ENCODE measurements at regions of chr7 and their contacts with region 1.

Region 1: DNA sequence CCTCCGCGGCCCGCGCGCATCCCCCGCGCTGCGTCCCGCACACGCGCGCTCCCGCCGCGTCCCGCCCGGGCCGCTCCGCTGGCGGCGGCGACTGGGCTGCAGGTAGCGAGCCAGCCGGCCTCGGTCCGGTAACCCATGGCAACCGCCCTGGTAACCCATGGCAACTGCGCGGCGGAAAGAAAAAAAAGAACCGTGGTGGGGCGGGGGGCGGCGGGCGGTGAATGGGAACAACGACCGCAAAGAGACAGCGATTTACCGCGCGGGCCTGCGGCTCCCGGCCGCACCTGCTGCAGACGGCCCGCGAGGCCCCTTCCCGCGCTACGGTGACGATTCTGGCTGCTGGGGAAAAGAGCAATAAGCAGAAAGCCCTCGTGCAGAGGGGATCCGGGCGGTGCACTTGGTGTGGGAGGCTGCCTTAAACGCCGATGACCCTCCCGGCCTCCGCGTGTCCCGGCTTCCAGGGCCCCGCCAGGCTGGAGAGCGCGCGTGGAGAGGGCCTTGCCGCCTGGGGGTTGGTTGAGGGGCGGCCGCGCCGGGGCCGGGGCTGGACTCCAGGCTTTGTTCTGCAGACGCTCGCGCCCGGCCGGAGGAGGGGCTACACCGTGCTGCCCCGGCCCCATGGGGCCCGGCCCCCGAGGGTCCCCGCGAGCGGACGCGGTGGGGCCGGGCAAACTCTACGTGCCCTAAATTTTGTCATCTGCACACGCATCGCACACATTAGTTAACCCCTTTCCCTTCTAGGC is 84.7 kb downstream of the SNX10 start:
- DNase-seq: peak in 1 of 2 experiments; percentile 95
- H3K4me3 ChIP-seq: peak overlapping the region; percentile 44 to 89 (median 78)
- H3K27ac ChIP-seq: no peak overlapping the region
- H3K4me1 ChIP-seq: peaks cover 0 to 2% (median 0%) of the 10 kb centered on the region in 4 experiments; a peak in 2 of 7 replicates
- H3K27me3 ChIP-seq: no peaks in the 10 kb centered on the region
- CTCF ChIP-seq: no peak
- EP300 ChIP-seq: no peak
- POLR2A ChIP-seq: no peak
- RAD21 ChIP-seq: no peak; a peak in 1 of 4 replicates

Region 2: DNA sequence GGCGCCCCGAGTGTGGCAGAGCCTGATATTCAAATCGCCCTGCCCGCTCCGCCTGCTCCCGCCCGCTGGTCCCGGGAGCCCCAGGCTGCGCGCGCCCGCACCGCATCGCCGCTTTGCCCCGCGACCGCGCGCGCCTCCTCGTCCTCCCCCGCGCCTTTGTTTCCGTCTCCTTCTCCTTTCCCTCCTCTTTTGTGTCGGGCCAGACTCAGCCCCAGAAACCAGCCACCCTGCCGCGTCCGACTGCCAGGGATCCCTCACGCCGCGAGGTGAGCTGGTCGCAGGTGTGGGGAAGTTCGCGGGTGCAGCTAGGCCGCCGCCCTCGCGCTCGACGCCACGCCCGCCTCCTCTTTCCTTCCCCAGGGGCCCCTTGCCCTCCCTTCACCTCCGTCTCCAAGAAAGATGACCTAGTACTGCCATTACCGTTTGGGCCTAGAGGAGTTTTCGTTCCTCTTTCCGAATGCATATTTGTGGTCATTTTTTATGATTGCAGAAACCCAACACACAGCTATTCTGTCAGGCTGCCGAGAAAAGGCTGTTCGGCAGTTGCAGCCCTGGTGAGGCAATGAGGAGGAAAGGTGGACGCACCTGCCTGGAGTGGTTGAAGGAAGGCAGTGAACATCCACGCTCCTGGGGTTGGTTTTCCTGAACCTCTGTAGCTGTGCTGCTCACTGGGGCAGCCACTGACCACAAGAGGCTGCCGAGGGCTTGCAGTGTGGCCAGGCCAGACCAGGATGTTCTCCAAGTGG is 22.6 kb after region 1 on chr7:
- CTCF ChIA-PET with region 1: interaction called, 8 read pairs
- POLR2A ChIA-PET with region 1: interaction called, 13 read pairs
- DNase-seq: peak in 1 of 2 experiments; percentile 79
- H3K4me3 ChIP-seq: peak overlapping the region; percentile 78 to 87 (median 80)
- H3K27ac ChIP-seq: peak overlapping the region; percentile 84
- H3K4me1 ChIP-seq: peaks cover 0 to 13% (median 3%) of the 10 kb centered on the region in 4 experiments; a peak in 5 of 7 replicates
- H3K27me3 ChIP-seq: no peaks in the 10 kb centered on the region
- CTCF ChIP-seq: peak; percentile 34 to 46 (median 45)
- EP300 ChIP-seq: no peak
- POLR2A ChIP-seq: peak in 1 of 2 experiments; percentile 56; a peak in 1 of 3 replicates
- RAD21 ChIP-seq: peak; percentile 45 to 55

Region 3: DNA sequence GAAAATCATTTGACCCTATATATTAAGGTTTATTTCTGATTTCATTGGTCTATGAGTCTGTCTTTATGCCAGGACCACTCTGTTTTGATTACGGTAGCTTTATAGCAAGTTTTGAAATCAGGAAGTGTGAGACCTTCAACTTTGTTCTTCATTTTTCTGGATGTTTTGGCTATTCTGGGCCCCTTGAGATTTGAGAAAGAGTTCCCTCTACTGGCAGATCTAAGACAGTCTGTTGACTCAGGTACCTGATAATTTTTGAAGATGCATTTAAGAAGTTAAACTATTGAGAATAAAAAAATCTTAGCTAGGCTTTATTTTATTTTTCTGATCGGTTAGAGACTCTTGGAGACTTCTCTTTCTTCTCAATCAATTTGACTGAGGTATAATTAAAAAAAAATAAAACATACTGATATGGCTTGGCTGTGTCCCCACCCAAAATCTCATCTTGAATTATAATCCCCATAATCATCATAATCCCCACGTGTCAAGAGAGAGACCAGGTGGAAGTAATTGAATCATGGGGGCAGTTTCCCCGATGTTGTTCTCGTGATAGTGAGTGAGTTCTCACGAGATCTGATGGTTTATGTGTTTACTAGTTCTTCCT is 124.5 kb after region 1 on chr7:
- CTCF ChIA-PET with region 1: interaction called, 11 read pairs
- POLR2A ChIA-PET with region 1: no interaction called
- DNase-seq: no peak
- H3K4me3 ChIP-seq: no peak overlapping the region
- H3K27ac ChIP-seq: no peak overlapping the region
- H3K4me1 ChIP-seq: no peaks in the 10 kb centered on the region; a peak in 1 of 7 replicates
- H3K27me3 ChIP-seq: no peaks in the 10 kb centered on the region
- CTCF ChIP-seq: peak in 2 of 3 experiments; percentile 48 to 63; a peak in 3 of 4 replicates
- EP300 ChIP-seq: no peak
- POLR2A ChIP-seq: no peak
- RAD21 ChIP-seq: peak; percentile 67 to 77

Region 4: DNA sequence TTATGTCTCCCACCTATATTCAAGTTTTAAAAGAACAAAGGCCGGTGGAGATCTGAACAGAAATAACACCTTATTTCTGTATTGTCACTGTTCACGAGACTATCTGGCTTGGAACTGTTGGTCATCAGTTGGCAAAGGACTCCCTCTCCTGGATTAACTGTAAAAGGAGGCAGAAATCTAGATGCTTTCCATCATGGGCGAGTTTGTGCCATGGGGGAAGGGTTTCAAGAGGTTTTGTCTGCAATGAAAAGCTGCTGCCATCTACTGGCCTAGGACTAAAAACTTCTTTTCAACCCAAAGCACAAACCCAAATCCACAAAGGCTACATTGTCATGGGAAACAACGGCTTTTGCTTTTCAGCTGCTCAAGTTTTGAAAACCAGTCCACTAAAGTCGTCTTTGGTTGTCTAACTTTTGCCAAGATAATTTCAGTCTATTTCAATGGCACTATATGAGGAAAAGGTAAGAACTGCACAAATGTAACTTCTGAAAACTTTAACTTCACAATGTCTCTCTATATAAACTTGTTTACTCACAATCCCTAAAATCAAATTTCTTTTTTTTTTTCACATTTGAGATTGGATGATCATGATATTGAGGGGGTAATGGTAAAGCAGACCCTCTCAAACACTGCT is 291.3 kb after region 1 on chr7:
- CTCF ChIA-PET with region 1: interaction called, 38 read pairs
- POLR2A ChIA-PET with region 1: interaction called, 3 read pairs
- DNase-seq: peak in 1 of 2 experiments; percentile 81
- H3K4me3 ChIP-seq: no peak overlapping the region
- H3K27ac ChIP-seq: no peak overlapping the region
- H3K4me1 ChIP-seq: no peaks in the 10 kb centered on the region
- H3K27me3 ChIP-seq: no peaks in the 10 kb centered on the region
- CTCF ChIP-seq: peak in 2 of 3 experiments; percentile 95 to 98; a peak in 3 of 4 replicates
- EP300 ChIP-seq: 0 out of 3 replicates have a peak, but pooled peaks of 1 of the 2 experiments have one; percentile 51
- POLR2A ChIP-seq: no peak
- RAD21 ChIP-seq: peak; percentile 100

Measured in H1 (cell line).